ENCODE measurements at regions of chr2 and their contacts with region 1.

Region 1: GRCh38 chr2:143451642-143452281 is 322.5 kb downstream of the ARHGAP15 start:
- DNase-seq: peak; percentile 23
- ATAC-seq: peak; percentile 64
- H3K4me3 Mint-ChIP-seq: no peak overlapping the region
- H3K27ac Mint-ChIP-seq: no peak overlapping the region
- H3K4me1 Mint-ChIP-seq: peaks cover 42% of the 10 kb centered on the region
- H3K27me3 Mint-ChIP-seq: no peaks in the 10 kb centered on the region

Region 2: GRCh38 chr2:143468341-143468888 is 16.7 kb after region 1 on chr2:
- CTCF ChIA-PET with region 1: interaction called, 3 read pairs
- POLR2A ChIA-PET with region 1: no interaction called
- intact Hi-C with region 1: loop called (anchors 1 to 2 kb)
- DNase-seq: no peak
- ATAC-seq: peak; percentile 83
- H3K4me3 Mint-ChIP-seq: no peak overlapping the region
- H3K27ac Mint-ChIP-seq: peak overlapping the region; percentile 52
- H3K4me1 Mint-ChIP-seq: peaks cover 39% of the 10 kb centered on the region
- H3K27me3 Mint-ChIP-seq: no peaks in the 10 kb centered on the region